ENCODE measurements at regions of chr9 and their contacts with region 1.

Region 1: DNA sequence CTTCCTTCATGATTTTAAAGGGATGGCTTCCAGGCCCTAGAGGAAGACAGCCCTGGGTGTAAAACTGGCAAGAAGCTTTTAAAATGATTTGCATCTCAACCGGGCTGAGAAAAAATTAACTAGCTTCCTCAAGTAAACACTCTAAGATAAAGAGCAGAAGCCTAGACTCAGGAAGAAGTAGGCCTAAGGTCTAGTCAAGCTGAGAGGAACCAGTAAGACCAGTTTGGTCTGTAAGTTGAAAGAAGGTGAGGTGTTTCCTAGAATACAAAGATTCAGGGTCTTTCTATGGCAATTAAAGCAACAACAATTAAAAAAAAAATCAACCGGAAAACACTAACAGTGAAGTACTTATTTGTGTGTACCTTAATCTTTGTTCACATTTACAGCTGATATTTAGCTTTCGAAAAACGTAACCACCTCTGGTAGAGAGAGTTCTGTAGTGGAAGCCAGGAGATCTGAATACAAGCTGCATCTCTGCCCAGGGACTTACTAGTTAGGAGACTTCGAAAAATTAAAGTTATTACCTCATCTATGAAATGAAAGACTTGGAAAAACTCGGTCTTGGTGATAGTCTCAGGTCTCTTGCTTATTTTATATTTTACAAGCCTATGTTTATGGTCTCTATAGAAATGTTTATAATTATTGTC is 75.7 kb downstream of the TUSC1 start:
- DNase-seq: peak; percentile 53
- ATAC-seq: peak; percentile 55
- H3K4me3 ChIP-seq: no peak overlapping the region; the same call in 1 of the 2 replicates
- H3K27ac ChIP-seq: no peak overlapping the region
- H3K4me1 ChIP-seq: peaks cover 16% of the 10 kb centered on the region
- H3K27me3 ChIP-seq: no peaks in the 10 kb centered on the region
- CTCF ChIP-seq: no peak

Region 2: GRCh38 chr9:25658571-25658970 is 56.0 kb after region 1 on chr9:
- CTCF ChIA-PET with region 1: no interaction called
- POLR2A ChIA-PET with region 1: no interaction called
- intact Hi-C with region 1: loop called (anchors 10 kb)
- DNase-seq: no peak
- ATAC-seq: no peak
- H3K4me3 ChIP-seq: no peak overlapping the region
- H3K27ac ChIP-seq: no peak overlapping the region
- H3K4me1 ChIP-seq: no peaks in the 10 kb centered on the region
- H3K27me3 ChIP-seq: no peaks in the 10 kb centered on the region
- CTCF ChIP-seq: no peak

Region 3: DNA sequence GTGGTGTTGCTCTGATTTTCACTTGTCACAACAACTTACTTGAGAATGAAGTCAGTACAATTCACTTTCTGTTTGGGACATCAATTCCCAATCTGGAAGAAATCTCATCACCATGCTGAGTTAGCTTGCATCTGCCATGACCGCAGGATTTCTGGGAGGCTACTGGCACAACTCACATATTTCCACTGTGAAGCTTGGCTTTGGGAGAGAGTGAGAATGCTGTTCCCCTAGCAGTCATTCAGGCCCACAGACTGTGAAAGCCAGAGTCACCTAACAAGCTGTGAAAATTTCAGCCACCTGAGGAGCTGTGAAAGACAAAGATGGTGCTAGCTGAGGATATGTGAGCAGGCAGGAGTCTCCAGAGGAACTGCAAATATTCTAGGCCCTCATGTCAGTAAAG is 440.9 kb after region 1 on chr9:
- CTCF ChIA-PET with region 1: no interaction called
- POLR2A ChIA-PET with region 1: no interaction called
- intact Hi-C with region 1: no loop called
- DNase-seq: no peak
- ATAC-seq: no peak
- H3K4me3 ChIP-seq: no peak overlapping the region
- H3K27ac ChIP-seq: no peak overlapping the region
- H3K4me1 ChIP-seq: no peaks in the 10 kb centered on the region
- H3K27me3 ChIP-seq: no peaks in the 10 kb centered on the region
- CTCF ChIP-seq: no peak

Region 4: GRCh38 chr9:26244661-26245451 is 642.3 kb after region 1 on chr9:
- CTCF ChIA-PET with region 1: no interaction called
- POLR2A ChIA-PET with region 1: no interaction called
- intact Hi-C with region 1: no loop called
- DNase-seq: no peak
- ATAC-seq: no peak
- H3K4me3 ChIP-seq: no peak overlapping the region
- H3K27ac ChIP-seq: peak overlapping the region; percentile 64
- H3K4me1 ChIP-seq: peaks cover 23% of the 10 kb centered on the region
- H3K27me3 ChIP-seq: no peaks in the 10 kb centered on the region
- CTCF ChIP-seq: no peak

Measured in PC-3 (cell line).